CD8-positive, alpha-beta T cell (primary cell): ENCODE measurements at regions of chr21 and their contacts with region 1.

Region 1: GRCh38 chr21:43659136-43660000 is at the starts of genes HSF2BP and RRP1B:
- DNase-seq: peak; percentile 65 to 91 (median 73)
- ATAC-seq: peak; percentile 82
- H3K4me3 ChIP-seq: peak within 1 kb of the TSS; percentile 81 to 84
- H3K4me3 Mint-ChIP-seq: peak within 1 kb of the TSS; percentile 93
- H3K27ac ChIP-seq: peak within 1 kb of the TSS; percentile 83 to 86
- H3K27ac Mint-ChIP-seq: peak within 1 kb of the TSS; percentile 92
- H3K4me1 ChIP-seq: peaks cover 31% of the 10 kb centered on the region
- H3K4me1 Mint-ChIP-seq: peaks cover 46% of the 10 kb centered on the region
- H3K27me3 ChIP-seq: no peaks in the 10 kb centered on the region
- H3K27me3 Mint-ChIP-seq: no peaks in the 10 kb centered on the region
- CTCF ChIP-seq: no peak
- total RNA-seq, gene HSF2BP: 0.64 to 1.3 TPM
- total RNA-seq, gene RRP1B: 24.3 to 26.1 TPM

Region 2: DNA sequence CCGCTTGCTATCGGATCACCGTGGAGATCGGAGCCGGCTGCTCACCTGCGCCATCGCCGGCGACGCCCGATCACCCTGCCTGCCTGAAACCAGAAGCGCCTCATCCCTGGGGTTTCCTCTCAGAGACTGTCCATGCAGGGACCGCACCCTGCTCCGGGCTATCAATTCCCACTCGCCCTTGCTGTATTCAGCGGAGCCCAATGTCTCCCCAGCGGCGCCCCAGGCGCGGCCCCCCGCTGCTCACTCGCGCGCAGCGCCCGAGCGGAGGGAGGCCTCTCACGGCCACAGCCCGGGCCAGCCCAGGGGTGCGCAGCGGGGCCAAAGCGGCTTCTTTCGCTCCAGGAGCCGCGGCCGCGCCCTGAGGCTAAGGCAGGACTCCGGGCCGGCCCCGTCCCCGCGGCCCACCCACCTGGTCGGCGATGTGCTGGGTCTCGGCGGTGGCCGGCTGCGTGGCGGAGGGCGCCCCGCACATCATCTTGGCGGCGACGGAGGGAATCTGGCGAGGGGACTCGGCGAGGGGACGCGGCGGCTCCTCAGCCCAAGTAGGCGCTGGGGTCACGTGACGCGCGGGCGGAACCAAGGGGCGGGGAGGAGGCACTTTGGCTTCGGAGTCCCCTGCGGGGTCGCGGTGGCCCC is 116.5 kb after region 1 on chr21 and contains the start of gene CSTB:
- CTCF ChIA-PET with region 1: no interaction called
- POLR2A ChIA-PET with region 1: interaction called, 3 read pairs
- intact Hi-C with region 1: loop called (anchors 2 to 10 kb)
- DNase-seq: peak; percentile 65 to 92 (median 83)
- ATAC-seq: peak; percentile 79
- H3K4me3 ChIP-seq: peak within 1 kb of the TSS; percentile 63 to 91
- H3K4me3 Mint-ChIP-seq: peak within 1 kb of the TSS; percentile 91
- H3K27ac ChIP-seq: peak within 1 kb of the TSS; percentile 31 to 70
- H3K27ac Mint-ChIP-seq: peak within 1 kb of the TSS; percentile 83
- H3K4me1 ChIP-seq: peaks cover 19% of the 10 kb centered on the region
- H3K4me1 Mint-ChIP-seq: peaks cover 32% of the 10 kb centered on the region
- H3K27me3 ChIP-seq: no peaks in the 10 kb centered on the region
- H3K27me3 Mint-ChIP-seq: no peaks in the 10 kb centered on the region
- CTCF ChIP-seq: no peak
- total RNA-seq, gene CSTB: 7.4 to 7.7 TPM

Region 3: GRCh38 chr21:43854773-43855633 is 195.6 kb after region 1 on chr21:
- CTCF ChIA-PET with region 1: no interaction called
- POLR2A ChIA-PET with region 1: no interaction called
- intact Hi-C with region 1: no loop called
- DNase-seq: peak in 1 of 9 experiments; percentile 19
- ATAC-seq: no peak
- H3K4me3 ChIP-seq: no peak overlapping the region
- H3K4me3 Mint-ChIP-seq: no peak overlapping the region
- H3K27ac ChIP-seq: no peak overlapping the region
- H3K27ac Mint-ChIP-seq: no peak overlapping the region
- H3K4me1 ChIP-seq: no peaks in the 10 kb centered on the region
- H3K4me1 Mint-ChIP-seq: no peaks in the 10 kb centered on the region
- H3K27me3 ChIP-seq: peaks cover 0 to 8% of the 10 kb centered on the region in 2 experiments
- H3K27me3 Mint-ChIP-seq: peaks cover 4% of the 10 kb centered on the region
- CTCF ChIP-seq: no peak